ENCODE measurements at regions of chr3 and their contacts with region 1.

Region 1: DNA sequence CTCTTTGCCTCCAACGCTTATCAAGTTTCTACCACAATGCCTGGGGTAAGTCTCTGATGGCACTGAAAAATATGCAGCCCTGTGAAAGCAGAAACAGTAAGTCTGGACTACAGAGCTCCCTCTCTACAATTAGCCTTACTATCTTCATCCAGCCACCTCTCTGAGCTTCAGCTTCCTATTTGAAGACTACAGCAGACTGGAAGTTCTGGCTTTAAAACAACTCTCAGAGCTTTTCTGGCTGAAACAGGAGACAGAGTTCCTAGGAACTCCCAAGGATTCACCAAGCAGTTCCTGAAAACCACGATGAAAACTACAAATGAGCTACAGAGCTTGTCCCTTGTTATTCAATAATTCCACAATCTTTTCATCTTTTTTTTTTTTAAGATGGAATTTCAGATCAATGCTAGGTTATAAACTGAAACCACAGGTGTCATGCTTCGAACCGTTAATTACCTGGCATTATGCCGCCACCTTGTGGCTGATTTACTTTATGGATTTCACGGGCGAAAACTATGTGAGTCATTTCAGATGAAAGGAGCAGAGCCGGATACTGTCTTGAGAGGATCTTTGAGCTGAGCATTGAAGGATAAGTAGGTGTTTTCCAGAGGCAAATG is 3.9 kb downstream of the CRYGS start:
- DNase-seq: peak; percentile 90
- ATAC-seq: peak; percentile 85
- H3K4me3 Mint-ChIP-seq: no peak overlapping the region
- H3K27ac Mint-ChIP-seq: no peak overlapping the region
- H3K4me1 Mint-ChIP-seq: peaks cover 58% of the 10 kb centered on the region
- H3K27me3 Mint-ChIP-seq: no peaks in the 10 kb centered on the region
- CTCF ChIP-seq: peak; percentile 79

Region 2: DNA sequence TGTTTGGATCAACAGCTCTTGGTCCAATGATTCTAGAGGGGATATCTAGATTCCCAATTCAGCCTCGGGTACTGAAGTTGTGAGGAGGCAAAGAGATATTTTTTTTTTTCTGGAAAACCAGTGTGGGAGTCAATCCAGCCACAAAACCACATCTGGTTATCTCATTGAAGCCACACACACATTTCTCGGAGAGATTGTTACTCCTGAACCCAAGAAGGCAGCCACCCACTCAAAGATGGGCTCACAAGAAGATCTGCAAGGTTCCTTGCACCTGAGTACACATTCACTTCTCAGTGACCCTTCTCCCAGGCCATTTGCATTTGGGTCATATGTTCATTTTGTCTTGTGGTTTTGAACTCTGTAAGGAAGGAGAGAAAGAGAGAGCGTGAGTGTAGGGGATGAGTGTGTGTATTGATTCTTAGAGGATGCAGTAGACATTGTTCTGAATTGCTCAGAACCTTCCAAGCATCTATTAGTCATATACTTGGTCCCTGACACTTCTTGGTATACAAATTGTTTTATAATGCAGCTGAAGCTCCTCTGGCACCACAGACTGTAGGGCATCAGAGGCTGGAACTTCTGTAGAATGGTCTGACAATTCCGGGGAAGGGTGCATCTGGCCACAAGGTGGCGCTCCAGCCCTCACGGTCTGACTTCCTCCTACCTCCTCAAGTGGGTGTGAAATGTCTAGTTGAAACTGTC is 563.2 kb before region 1 on chr3:
- CTCF ChIA-PET with region 1: interaction called, 32 read pairs
- POLR2A ChIA-PET with region 1: interaction called, 3 read pairs
- intact Hi-C with region 1: loop called (anchors 5 kb)
- DNase-seq: peak; percentile 96
- ATAC-seq: peak; percentile 93
- H3K4me3 Mint-ChIP-seq: peak overlapping the region; percentile 0
- H3K27ac Mint-ChIP-seq: peak overlapping the region; percentile 36
- H3K4me1 Mint-ChIP-seq: peaks cover 16% of the 10 kb centered on the region
- H3K27me3 Mint-ChIP-seq: peaks cover 8% of the 10 kb centered on the region
- CTCF ChIP-seq: peak; percentile 90

Region 3: DNA sequence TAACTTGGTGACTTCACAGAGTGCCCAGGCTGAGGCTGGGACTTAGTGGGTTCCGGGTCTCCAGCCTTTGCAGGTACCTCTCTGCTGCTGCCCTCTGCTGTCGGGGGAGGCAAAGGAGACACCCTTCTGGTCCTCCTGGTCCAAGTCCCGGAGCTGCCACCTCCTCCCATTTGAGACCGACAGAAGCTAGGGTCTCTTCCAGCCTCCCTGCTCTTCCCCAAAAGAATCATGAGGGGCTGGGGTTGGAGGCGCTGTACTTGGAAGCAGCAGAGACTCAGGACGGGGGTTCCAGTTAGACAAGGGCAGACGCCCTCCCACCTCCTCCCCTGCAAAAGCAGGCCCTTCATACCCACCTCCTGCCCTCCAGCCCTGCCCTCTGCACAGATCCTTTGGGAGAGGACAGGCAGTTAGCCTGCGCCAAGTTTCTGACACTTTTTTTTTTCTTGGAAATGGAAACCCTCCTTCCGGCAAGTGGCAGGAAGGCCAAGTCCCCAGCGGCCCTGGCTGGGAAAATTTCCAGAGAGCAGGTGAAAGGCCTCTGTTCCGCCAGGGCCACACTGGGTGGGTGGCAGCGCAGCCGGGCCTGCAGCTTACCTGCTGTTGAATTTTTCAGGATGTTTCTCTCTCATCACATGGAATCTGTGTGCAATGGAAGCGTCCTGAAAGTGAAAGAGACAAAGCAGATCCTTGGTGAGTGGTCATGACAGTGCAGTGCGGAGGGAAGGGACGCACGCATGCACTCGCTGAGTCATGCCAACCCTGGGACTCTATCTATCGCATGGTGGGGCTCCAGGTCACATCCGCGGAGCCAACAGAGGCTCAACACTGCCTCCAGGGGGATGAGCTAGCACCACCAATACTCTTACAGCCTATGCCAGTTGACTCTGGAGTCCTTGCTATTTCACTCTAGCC is 298.2 kb before region 1 on chr3:
- CTCF ChIA-PET with region 1: interaction called, 21 read pairs
- POLR2A ChIA-PET with region 1: interaction called, 3 read pairs
- intact Hi-C with region 1: no loop called
- DNase-seq: peak; percentile 87
- ATAC-seq: peak; percentile 99
- H3K4me3 Mint-ChIP-seq: peak overlapping the region; percentile 17
- H3K27ac Mint-ChIP-seq: no peak overlapping the region
- H3K4me1 Mint-ChIP-seq: peaks cover 6% of the 10 kb centered on the region
- H3K27me3 Mint-ChIP-seq: peaks cover 20% of the 10 kb centered on the region
- CTCF ChIP-seq: peak; percentile 64

Region 4: GRCh38 chr3:186374376-186374775 is 166.0 kb before region 1 on chr3:
- CTCF ChIA-PET with region 1: no interaction called
- POLR2A ChIA-PET with region 1: no interaction called
- intact Hi-C with region 1: no loop called
- DNase-seq: no peak
- ATAC-seq: no peak
- H3K4me3 Mint-ChIP-seq: no peak overlapping the region
- H3K27ac Mint-ChIP-seq: no peak overlapping the region
- H3K4me1 Mint-ChIP-seq: peaks cover 2% of the 10 kb centered on the region
- H3K27me3 Mint-ChIP-seq: peaks cover 24% of the 10 kb centered on the region
- CTCF ChIP-seq: no peak

Region 5: GRCh38 chr3:186471771-186472170 is 68.6 kb before region 1 on chr3:
- CTCF ChIA-PET with region 1: interaction called, 16 read pairs
- POLR2A ChIA-PET with region 1: no interaction called
- intact Hi-C with region 1: no loop called
- DNase-seq: no peak
- ATAC-seq: no peak
- H3K4me3 Mint-ChIP-seq: no peak overlapping the region
- H3K27ac Mint-ChIP-seq: no peak overlapping the region
- H3K4me1 Mint-ChIP-seq: no peaks in the 10 kb centered on the region
- H3K27me3 Mint-ChIP-seq: no peaks in the 10 kb centered on the region
- CTCF ChIP-seq: no peak

Region 6: GRCh38 chr3:186496016-186496415 is 44.3 kb before region 1 on chr3:
- CTCF ChIA-PET with region 1: interaction called, 17 read pairs
- POLR2A ChIA-PET with region 1: interaction called, 3 read pairs
- intact Hi-C with region 1: no loop called
- DNase-seq: no peak
- ATAC-seq: no peak
- H3K4me3 Mint-ChIP-seq: no peak overlapping the region
- H3K27ac Mint-ChIP-seq: no peak overlapping the region
- H3K4me1 Mint-ChIP-seq: peaks cover 4% of the 10 kb centered on the region
- H3K27me3 Mint-ChIP-seq: peaks cover 2% of the 10 kb centered on the region
- CTCF ChIP-seq: no peak

Region 7: DNA sequence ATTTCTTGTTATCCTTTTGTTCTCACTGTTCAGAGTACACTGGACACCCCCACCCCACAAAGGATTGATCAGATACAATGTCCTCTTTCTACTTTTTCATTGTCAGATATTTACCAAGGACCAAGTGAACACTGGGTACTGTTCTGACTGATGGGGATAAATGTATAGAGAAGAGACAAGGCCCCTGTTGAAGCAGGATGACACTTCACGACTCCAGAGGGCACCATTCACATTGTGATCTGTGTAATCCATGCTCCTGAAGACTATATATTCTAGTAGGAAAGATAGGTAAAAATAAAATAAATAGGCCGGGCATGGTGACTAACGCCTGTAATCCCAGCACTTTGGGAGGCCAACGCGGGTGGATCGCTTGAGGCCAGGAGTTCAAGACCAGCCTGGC is 11.1 kb after region 1 on chr3:
- CTCF ChIA-PET with region 1: interaction called, 34 read pairs
- POLR2A ChIA-PET with region 1: interaction called, 10 read pairs
- intact Hi-C with region 1: no loop called
- DNase-seq: no peak
- ATAC-seq: no peak
- H3K4me3 Mint-ChIP-seq: no peak overlapping the region
- H3K27ac Mint-ChIP-seq: no peak overlapping the region
- H3K4me1 Mint-ChIP-seq: no peaks in the 10 kb centered on the region
- H3K27me3 Mint-ChIP-seq: no peaks in the 10 kb centered on the region
- CTCF ChIP-seq: no peak

Region 8: GRCh38 chr3:186570096-186570940 is 30.0 kb after region 1 on chr3 and contains the start of gene DNAJB11:
- CTCF ChIA-PET with region 1: interaction called, 12 read pairs
- POLR2A ChIA-PET with region 1: interaction called, 5 read pairs
- intact Hi-C with region 1: no loop called
- DNase-seq: peak; percentile 100
- ATAC-seq: peak; percentile 91
- H3K4me3 Mint-ChIP-seq: peak within 1 kb of the TSS; percentile 93
- H3K27ac Mint-ChIP-seq: peak within 1 kb of the TSS; percentile 95
- H3K4me1 Mint-ChIP-seq: peaks cover 54% of the 10 kb centered on the region
- H3K27me3 Mint-ChIP-seq: no peaks in the 10 kb centered on the region
- CTCF ChIP-seq: no peak
- total RNA-seq, gene DNAJB11: 30.0 to 31.5 TPM